GM10248 (cell line): ENCODE measurements at regions of chr5 and their contacts with region 1.

Region 1: DNA sequence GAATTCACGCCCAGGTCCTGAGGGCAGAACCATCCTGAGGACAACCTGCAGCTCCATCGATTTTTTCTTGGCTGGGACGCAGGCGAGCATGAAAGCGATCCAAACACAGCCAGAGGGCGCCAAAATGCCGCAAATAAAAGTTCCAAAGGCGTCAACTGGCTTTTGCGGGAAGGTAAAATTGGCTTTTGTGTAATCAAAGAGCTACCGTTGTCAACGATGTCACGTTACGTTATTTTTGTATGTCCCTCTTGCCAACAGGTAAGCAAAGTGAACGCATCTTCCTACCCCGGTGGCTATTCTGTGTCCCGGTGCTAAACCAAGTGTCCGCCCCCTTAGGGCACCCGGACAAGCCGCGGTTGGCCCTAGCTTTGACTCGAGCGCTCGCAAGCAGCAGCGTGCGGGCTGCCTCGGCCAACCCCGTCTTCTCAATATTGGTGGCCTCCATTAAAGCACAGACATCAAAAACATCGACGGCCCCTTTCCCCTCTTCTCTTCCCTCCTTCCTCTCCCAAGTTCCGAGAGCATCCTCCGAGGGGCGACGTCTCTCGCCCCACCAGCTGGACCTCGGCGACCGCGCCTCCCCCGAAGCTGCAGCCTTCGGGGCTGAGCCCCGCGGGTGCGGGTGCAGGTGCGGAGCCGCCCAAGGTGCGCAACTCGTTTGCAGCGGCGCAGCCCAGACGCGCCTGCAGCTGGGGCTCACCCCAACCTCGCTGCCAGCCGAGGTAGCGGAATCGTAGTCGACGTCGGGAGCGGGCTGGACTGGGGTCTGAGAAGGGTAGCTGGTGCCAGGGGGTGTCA is 1.1 kb upstream of the BASP1 start:
- DNase-seq: peak; percentile 73
- CTCF ChIP-seq: peak; percentile 80

Region 2: GRCh38 chr5:16934123-16934522 is 282.3 kb before region 1 on chr5:
- CTCF ChIA-PET with region 1: no interaction called
- POLR2A ChIA-PET with region 1: no interaction called
- DNase-seq: peak; percentile 54
- CTCF ChIP-seq: peak; percentile 43

Region 3: DNA sequence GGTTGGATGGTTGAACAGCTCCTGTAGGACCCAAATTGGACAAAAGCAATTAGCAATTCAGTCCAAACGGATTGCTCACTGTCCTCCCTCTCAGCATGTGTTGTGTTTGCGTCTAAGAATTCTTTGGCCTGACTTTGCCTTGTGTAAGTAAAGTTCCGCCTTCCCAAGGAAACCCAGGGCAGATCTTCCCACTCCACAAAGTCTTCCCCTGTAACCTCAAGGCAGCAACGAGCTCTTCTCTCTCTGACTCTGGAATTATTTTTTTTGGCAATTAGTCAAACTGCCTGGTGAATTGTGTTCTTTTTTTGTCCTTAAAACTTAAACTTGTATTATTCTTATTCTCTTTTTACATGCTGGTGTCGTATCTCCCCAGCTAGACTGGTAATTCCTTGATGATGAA is 19.7 kb before region 1 on chr5:
- CTCF ChIA-PET with region 1: interaction called, 23 read pairs
- POLR2A ChIA-PET with region 1: no interaction called
- DNase-seq: no peak
- CTCF ChIP-seq: no peak

Region 4: GRCh38 chr5:17233488-17233887 is 17.1 kb after region 1 on chr5:
- CTCF ChIA-PET with region 1: interaction called, 11 read pairs
- POLR2A ChIA-PET with region 1: no interaction called
- DNase-seq: no peak
- CTCF ChIP-seq: no peak

Region 5: DNA sequence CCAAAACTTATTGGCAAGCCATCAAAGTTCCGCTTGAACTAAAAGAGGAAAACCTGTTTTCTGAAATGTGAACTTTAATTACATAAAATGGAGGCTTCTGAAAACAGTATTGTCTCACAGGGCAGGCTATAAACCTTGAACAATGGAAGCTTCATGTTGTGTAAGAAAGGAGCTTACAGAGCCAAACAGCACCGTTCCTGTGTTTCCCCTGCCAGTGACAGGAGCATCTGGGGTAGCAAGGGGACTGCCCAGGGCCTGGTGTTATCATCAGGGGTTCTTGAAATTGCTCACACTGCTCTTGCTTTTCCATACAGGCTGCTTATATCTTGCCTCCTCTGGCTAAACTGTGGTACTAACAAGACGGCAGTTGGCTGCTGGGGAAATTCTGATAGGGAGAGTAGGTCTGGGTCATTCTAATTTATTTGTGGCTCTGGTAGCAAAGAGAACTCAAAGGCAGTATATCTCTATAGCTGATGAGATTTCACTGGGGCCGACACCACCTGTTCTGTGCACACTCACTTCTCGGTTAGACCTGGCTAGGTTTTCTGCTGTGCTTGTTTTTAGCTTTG is 41.4 kb after region 1 on chr5:
- CTCF ChIA-PET with region 1: interaction called, 16 read pairs
- POLR2A ChIA-PET with region 1: no interaction called
- DNase-seq: peak; percentile 53
- CTCF ChIP-seq: no peak

Region 6: GRCh38 chr5:17395106-17395880 is 178.9 kb after region 1 on chr5:
- CTCF ChIA-PET with region 1: no interaction called
- POLR2A ChIA-PET with region 1: no interaction called
- DNase-seq: no peak
- CTCF ChIP-seq: no peak

Region 7: GRCh38 chr5:17470064-17470463 is 253.7 kb after region 1 on chr5:
- CTCF ChIA-PET with region 1: interaction called, 15 read pairs
- POLR2A ChIA-PET with region 1: no interaction called
- DNase-seq: no peak
- CTCF ChIP-seq: no peak

Region 8: GRCh38 chr5:18305297-18305924 is 1089.0 kb after region 1 on chr5:
- CTCF ChIA-PET with region 1: interaction called, 128 read pairs
- POLR2A ChIA-PET with region 1: no interaction called
- DNase-seq: peak; percentile 33
- CTCF ChIP-seq: peak; percentile 79